Heart left ventricle (tissue), 16 donors: ENCODE measurements at regions of chr11 and their contacts with region 1.

Region 1: GRCh38 chr11:65117216-65118096 is at the start of gene ZNHIT2:
- DNase-seq: peak; percentile 99 to 100 (median 99)
- ATAC-seq: peak; percentile 82 to 89 (median 86)
- H3K4me3 ChIP-seq: peak within 1 kb of the TSS; percentile 67 to 99 (median 88)
- H3K27ac ChIP-seq: peak within 1 kb of the TSS; percentile 71 to 93 (median 84)
- H3K4me1 ChIP-seq: peaks cover 0 to 63% (median 40%) of the 10 kb centered on the region in 12 donors
- H3K27me3 ChIP-seq: peaks cover 0 to 5% (median 0%) of the 10 kb centered on the region in 9 donors
- CTCF ChIP-seq: peak; percentile 91 to 99 (median 96)
- POLR2A ChIP-seq: peak in 1 of 2 donors; percentile 55
- total RNA-seq, gene ZNHIT2: 5.5 to 14.3 (median 7.3) TPM

Region 2: DNA sequence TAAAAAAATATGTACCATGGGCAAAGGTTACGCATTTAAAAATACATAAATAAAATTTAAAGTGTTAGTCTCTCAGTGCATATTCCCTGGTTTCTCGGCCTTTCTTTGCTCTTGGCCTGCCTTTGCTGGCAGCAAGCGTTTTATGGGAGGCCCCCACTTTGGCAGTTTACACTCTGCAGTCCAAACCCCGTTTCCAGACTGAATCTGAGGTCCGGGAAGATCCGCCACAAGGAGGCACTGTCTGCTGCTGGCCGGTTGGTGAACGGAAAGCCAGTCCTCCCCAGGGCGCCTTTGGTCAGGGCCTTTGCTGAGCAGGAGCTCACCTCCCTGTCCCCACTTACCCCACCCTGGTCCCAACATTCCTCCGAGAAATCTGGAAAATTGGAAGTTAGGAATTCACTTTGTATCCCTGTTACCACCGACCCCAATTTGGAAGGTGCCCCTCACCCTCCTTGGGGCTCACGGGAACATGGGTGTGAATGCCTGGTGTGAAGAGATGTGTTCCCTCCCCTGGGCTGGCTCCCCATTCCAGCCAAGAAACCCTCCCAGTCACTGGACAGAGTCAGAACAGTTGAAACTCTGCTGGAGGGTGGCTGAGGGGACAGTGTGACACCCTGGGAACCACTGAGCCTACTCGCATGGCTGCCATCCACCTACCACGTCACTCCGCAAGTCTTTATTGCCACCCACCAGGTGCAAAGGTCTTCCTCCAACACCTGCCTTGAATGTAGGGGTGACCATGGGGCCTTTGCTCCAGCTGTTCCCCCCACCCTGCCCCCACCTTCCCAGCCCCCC is 329.7 kb before region 1 on chr11:
- intact Hi-C with region 1: loop called in 1 of 10 experiments (anchors 2 kb)
- DNase-seq: peak in 1 of 5 donors; percentile 61
- ATAC-seq: peak in 3 of 4 donors; percentile 55 to 74 (median 65)
- H3K4me3 ChIP-seq: no peak overlapping the region
- H3K27ac ChIP-seq: peak overlapping the region in 1 of 12 donors; percentile 26
- H3K4me1 ChIP-seq: no peaks in the 10 kb centered on the region
- H3K27me3 ChIP-seq: no peaks in the 10 kb centered on the region
- CTCF ChIP-seq: peak; percentile 46 to 76 (median 62)
- POLR2A ChIP-seq: no peak

Region 3: DNA sequence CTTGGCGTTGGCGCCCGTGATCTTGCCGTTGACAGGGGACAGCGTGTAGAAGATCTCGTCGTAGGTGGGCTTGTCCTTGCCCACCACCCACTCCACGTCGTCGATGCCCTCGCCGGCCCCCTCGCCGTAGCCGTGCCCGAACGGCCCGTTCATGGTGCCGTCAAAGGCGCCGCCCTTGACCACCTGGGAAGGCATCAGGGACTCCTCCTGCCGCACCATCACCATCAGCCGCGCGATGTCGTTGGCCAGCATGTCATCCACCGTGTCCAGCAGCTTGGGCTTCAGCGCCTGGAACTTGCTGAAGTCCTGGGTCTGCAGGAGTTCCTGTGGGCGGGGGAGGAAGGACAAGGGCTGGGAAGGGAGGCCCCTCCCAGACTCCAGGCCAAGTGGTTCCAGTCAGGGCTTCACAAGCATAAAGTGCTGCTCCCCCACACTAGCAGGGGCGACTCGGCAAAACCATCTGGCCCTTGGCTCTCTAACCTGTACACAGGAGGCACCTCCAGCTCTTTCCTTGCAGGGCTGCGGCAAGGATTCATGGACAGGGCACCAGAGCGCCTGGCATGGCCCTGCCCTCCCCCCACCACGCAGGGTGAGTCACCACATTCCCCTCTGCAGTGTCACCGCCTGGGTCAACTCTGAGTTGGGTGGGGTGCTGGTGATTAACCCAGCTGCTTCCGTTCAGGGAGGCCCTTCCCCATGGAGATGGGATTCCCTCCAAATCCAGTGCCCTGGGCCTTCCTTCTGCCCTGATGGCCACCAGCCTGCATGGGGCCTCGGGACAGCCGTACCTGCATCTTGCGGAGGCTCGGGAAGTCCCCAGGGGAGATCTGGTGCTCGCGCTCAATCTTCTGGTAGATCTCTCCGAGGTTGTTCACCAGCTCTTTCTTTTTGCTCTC is 262.7 kb before region 1 on chr11:
- intact Hi-C with region 1: loop called in 4 of 10 experiments (anchors 5 to 10 kb)
- DNase-seq: peak; percentile 79 to 94 (median 86)
- ATAC-seq: peak; percentile 49 to 85 (median 83)
- H3K4me3 ChIP-seq: peak overlapping the region in 9 of 12 donors; percentile 1 to 43 (median 24)
- H3K27ac ChIP-seq: peak overlapping the region; percentile 5 to 93 (median 88)
- H3K4me1 ChIP-seq: peaks cover 46 to 100% (median 93%) of the 10 kb centered on the region in 12 donors
- H3K27me3 ChIP-seq: no peaks in the 10 kb centered on the region
- CTCF ChIP-seq: no peak
- POLR2A ChIP-seq: peak in 1 of 2 donors; percentile 15

Region 4: DNA sequence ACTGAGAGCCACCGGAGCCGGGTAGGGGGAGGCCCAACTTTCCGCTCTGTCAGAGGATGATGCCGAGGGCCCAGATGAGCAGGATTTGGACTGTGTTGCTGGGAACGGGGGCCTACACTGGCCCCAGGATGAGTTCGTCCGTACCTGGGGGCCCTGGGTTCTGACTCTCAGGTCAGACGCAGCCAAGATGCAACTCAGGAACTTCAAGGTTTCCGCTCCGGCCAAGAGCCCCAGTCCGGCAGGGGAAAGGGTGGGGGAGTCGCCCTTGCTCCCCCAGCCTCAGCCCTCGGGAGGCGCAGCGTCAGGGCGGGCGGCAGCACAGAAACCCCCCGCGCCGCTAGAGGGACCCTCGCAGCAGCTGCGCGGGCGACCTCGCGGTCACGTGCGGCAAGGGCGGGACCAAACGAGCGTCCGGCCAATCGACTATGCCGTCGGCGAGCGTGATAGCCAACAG is 103.7 kb before region 1 on chr11:
- intact Hi-C with region 1: loop called in 7 of 10 experiments (anchors 1 to 10 kb)
- DNase-seq: peak; percentile 95 to 96 (median 95)
- ATAC-seq: peak; percentile 85 to 95 (median 94)
- H3K4me3 ChIP-seq: peak overlapping the region; percentile 61 to 89 (median 80)
- H3K27ac ChIP-seq: peak overlapping the region; percentile 92 to 100 (median 99)
- H3K4me1 ChIP-seq: peaks cover 0 to 30% (median 14%) of the 10 kb centered on the region in 12 donors
- H3K27me3 ChIP-seq: no peaks in the 10 kb centered on the region
- CTCF ChIP-seq: peak in 7 of 12 donors; percentile 8 to 72 (median 50)
- POLR2A ChIP-seq: no peak

Region 5: DNA sequence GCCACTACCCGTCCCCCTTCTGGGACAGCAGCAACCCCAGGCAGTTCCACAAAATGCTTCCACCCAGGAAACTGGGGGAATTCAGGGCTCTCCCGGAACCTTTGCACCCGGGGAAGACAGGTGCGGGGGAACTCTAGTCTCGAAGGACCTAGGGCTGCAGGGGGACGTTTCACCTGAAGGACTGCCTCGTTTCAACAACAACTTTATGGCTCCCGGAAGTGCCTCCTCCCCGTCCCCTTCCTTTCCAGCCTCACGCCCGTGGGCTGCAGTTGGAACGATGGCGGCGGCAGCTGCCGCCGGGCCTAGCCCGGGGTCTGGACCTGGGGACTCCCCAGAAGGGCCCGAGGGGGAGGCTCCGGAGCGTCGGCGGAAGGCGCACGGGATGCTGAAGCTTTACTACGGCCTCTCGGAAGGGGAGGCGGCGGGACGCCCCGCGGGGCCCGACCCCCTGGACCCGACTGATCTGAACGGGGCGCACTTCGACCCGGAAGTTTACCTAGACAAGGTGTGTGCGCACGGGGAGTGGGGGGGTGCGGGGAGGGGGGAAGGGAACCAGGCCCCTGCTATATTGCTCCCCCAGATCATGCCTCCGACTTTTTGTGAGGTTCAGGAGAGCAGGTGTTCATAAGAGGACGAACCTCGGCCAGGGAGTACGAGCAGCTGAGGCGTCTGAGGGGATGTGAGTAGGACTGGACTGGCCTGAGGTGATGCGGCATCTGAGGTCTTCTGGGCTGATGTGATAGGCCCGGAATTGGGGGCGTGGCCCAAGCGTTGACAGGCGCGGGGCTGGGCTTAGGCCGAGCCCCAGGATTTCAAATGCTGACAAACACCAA is 21.3 kb before region 1 on chr11 and contains the start of gene VPS51:
- intact Hi-C with region 1: loop called in 2 of 10 experiments (anchors 1 to 2 kb)
- DNase-seq: peak; percentile 88 to 92 (median 90)
- ATAC-seq: peak; percentile 92 to 96 (median 95)
- H3K4me3 ChIP-seq: peak within 1 kb of the TSS; percentile 59 to 91 (median 85)
- H3K27ac ChIP-seq: peak within 1 kb of the TSS; percentile 52 to 96 (median 92)
- H3K4me1 ChIP-seq: peaks cover 0 to 25% (median 15%) of the 10 kb centered on the region in 12 donors
- H3K27me3 ChIP-seq: no peaks in the 10 kb centered on the region
- CTCF ChIP-seq: no peak
- POLR2A ChIP-seq: peak in 1 of 2 donors; percentile 47
- total RNA-seq, gene VPS51: 78.4 to 165 (median 106) TPM

Region 6: GRCh38 chr11:65329944-65330403 is 212.5 kb after region 1 on chr11:
- intact Hi-C with region 1: loop called in 1 of 10 experiments (anchors 10 kb)
- DNase-seq: peak in 4 of 5 donors; percentile 75 to 88 (median 86)
- ATAC-seq: peak; percentile 10 to 32 (median 24)
- H3K4me3 ChIP-seq: peak overlapping the region in 1 of 12 donors; percentile 18
- H3K27ac ChIP-seq: peak overlapping the region in 4 of 12 donors; percentile 15 to 64 (median 23)
- H3K4me1 ChIP-seq: peaks cover 0 to 24% (median 9%) of the 10 kb centered on the region in 12 donors
- H3K27me3 ChIP-seq: no peaks in the 10 kb centered on the region
- CTCF ChIP-seq: peak; percentile 76 to 88 (median 84)
- POLR2A ChIP-seq: no peak